ENCODE measurements at regions of chr13 and their contacts with region 1.

Region 1: GRCh38 chr13:29384466-29384865 is 211.0 kb downstream of the SLC7A1 start:
- DNase-seq: no peak
- ATAC-seq: no peak
- H3K4me3 ChIP-seq: no peak overlapping the region
- H3K27ac ChIP-seq: no peak overlapping the region
- H3K4me1 ChIP-seq: no peaks in the 10 kb centered on the region
- H3K27me3 ChIP-seq: peaks cover 1% of the 10 kb centered on the region; the same call in 1 of the 2 replicates
- CTCF ChIP-seq: no peak
- POLR2A ChIP-seq: no peak
- RAD21 ChIP-seq: no peak

Region 2: DNA sequence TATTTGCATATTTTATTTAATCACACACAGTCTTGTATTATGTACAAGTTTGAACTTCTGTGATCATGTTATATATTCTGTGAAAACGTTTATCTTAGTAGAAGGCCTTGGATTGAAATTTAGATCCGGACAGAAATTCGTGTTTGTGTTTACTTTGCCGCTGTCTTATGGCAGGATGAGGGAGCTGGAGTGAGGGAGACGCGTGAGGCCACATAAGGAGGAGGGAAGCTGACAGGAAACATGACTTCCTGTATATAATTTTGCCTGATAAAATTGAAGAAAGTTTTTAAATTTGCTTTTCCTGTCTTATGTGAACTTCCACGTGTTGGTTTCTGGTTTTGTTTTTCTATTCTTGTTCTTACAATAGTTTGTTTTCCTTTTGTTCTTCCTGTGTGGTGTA is 364.2 kb before region 1 on chr13:
- CTCF ChIA-PET with region 1: no interaction called
- POLR2A ChIA-PET with region 1: no interaction called
- dilution Hi-C with region 1: no loop called
- in situ Hi-C with region 1: no loop called
- intact Hi-C with region 1: no loop called
- DNase-seq: no peak
- ATAC-seq: no peak
- H3K4me3 ChIP-seq: no peak overlapping the region
- H3K27ac ChIP-seq: no peak overlapping the region
- H3K4me1 ChIP-seq: no peaks in the 10 kb centered on the region
- H3K27me3 ChIP-seq: no peaks in the 10 kb centered on the region
- CTCF ChIP-seq: no peak
- POLR2A ChIP-seq: no peak
- RAD21 ChIP-seq: no peak

Region 3: GRCh38 chr13:29397265-29397664 is 12.8 kb after region 1 on chr13:
- CTCF ChIA-PET with region 1: no interaction called
- POLR2A ChIA-PET with region 1: interaction called, 13 read pairs
- dilution Hi-C with region 1: no loop called
- in situ Hi-C with region 1: no loop called
- intact Hi-C with region 1: no loop called
- DNase-seq: no peak
- ATAC-seq: no peak
- H3K4me3 ChIP-seq: no peak overlapping the region
- H3K27ac ChIP-seq: no peak overlapping the region
- H3K4me1 ChIP-seq: no peaks in the 10 kb centered on the region
- H3K27me3 ChIP-seq: peaks cover 5% of the 10 kb centered on the region; the same call in 1 of the 2 replicates
- CTCF ChIP-seq: no peak
- POLR2A ChIP-seq: no peak
- RAD21 ChIP-seq: no peak

Region 4: DNA sequence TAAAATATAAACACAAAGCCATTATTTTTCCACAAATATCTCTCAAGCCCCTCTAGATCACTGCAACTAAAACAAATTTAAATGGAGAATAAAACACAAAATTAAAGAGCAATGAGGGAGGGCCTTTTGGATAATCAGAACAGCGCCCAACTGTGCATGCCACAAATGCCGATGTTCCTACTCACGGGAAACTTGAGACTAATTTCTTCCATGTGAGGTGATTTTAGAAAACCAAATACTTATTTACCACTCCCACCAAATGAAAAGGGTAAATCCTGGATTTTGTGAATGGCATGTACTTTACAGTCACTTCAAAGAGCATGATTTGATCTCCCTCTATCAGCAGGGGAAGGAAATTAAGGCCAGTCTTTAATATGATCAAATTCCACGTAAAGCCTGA is 136.2 kb after region 1 on chr13:
- CTCF ChIA-PET with region 1: no interaction called
- POLR2A ChIA-PET with region 1: no interaction called
- dilution Hi-C with region 1: no loop called
- in situ Hi-C with region 1: no loop called
- intact Hi-C with region 1: no loop called
- DNase-seq: peak; percentile 55
- ATAC-seq: peak; percentile 82
- H3K4me3 ChIP-seq: no peak overlapping the region
- H3K27ac ChIP-seq: no peak overlapping the region
- H3K4me1 ChIP-seq: peaks cover 7% of the 10 kb centered on the region
- H3K27me3 ChIP-seq: no peaks in the 10 kb centered on the region
- CTCF ChIP-seq: no peak
- POLR2A ChIP-seq: no peak
- RAD21 ChIP-seq: no peak

Region 5: GRCh38 chr13:29532116-29532515 is 147.7 kb after region 1 on chr13:
- CTCF ChIA-PET with region 1: no interaction called
- POLR2A ChIA-PET with region 1: no interaction called
- dilution Hi-C with region 1: no loop called
- in situ Hi-C with region 1: no loop called
- intact Hi-C with region 1: no loop called
- DNase-seq: no peak
- ATAC-seq: no peak
- H3K4me3 ChIP-seq: no peak overlapping the region
- H3K27ac ChIP-seq: no peak overlapping the region
- H3K4me1 ChIP-seq: no peaks in the 10 kb centered on the region
- H3K27me3 ChIP-seq: no peaks in the 10 kb centered on the region
- CTCF ChIP-seq: no peak
- POLR2A ChIP-seq: no peak
- RAD21 ChIP-seq: no peak